Activated T-helper 2 cell treated with anti-CD3 and anti-CD28 coated beads, Interferon-gamma antibody, Interleukin-2, Interleukin-4, amounts not matched to agents 10 μg/mL and 5 μg/mL and 100 μg/mL, durations not matched to agents 14 hours and 24 hours and 36 hours (primary cell): ENCODE measurements at regions of chr9 and their contacts with region 1.

Region 1: GRCh38 chr9:91207729-91208418 is 153.8 kb downstream of the AUH start:
- DNase-seq: no peak
- H3K4me3 Mint-ChIP-seq: peak overlapping the region; percentile 49
- H3K27ac Mint-ChIP-seq: peak overlapping the region; percentile 93
- H3K4me1 Mint-ChIP-seq: peaks cover 67% of the 10 kb centered on the region
- H3K27me3 Mint-ChIP-seq: no peaks in the 10 kb centered on the region

Region 2: GRCh38 chr9:91101611-91102168 is 106.2 kb before region 1 on chr9:
- intact Hi-C with region 1: loop called (anchors 1 kb)
- DNase-seq: peak; percentile 85
- H3K4me3 Mint-ChIP-seq: peak overlapping the region; percentile 78
- H3K27ac Mint-ChIP-seq: peak overlapping the region; percentile 93
- H3K4me1 Mint-ChIP-seq: peaks cover 64% of the 10 kb centered on the region
- H3K27me3 Mint-ChIP-seq: no peaks in the 10 kb centered on the region

Region 3: DNA sequence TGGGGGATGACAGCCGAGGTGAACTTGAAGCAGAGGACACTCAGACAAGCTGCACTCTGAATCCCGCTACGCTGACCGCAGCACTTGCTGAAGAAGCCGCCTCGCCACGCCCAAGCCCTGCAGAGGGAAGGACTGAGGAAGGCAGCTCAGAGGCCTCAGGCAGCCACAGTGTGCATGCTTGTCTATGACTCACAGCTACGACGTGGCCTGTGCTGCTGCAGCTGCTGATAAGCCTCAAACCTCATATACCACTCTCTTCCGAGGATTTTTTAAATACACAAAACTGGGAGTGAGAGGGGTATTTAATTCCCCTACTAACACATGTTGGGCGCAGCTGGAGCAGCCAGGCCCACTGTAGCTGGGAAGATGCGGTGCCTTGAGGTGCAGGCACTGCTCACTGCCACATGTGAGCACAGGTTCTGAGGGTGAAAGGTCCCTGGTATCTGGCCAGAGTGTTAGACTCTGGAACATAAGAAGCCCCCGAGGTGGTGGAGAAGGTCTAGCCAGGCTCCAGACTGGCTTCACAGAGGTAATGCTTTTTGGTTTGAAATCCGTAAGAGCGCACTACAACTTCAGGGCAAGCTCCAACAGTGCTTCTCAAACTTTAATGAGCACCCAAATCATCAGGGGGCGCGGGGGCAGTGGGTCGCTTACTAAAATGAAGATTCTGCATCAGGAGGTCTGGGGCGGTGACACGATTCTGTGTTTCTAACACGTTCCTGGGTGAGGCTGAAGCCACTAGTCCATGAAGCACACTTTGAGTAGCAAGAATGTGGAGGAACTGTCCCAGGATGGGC is 43.0 kb before region 1 on chr9:
- intact Hi-C with region 1: loop called (anchors 1 kb)
- DNase-seq: peak; percentile 82
- H3K4me3 Mint-ChIP-seq: peak overlapping the region; percentile 84
- H3K27ac Mint-ChIP-seq: peak overlapping the region; percentile 98
- H3K4me1 Mint-ChIP-seq: peaks cover 58% of the 10 kb centered on the region
- H3K27me3 Mint-ChIP-seq: no peaks in the 10 kb centered on the region

Region 4: GRCh38 chr9:91245431-91246313 is 37.8 kb after region 1 on chr9:
- intact Hi-C with region 1: loop called (anchors 2 kb)
- DNase-seq: no peak
- H3K4me3 Mint-ChIP-seq: peak overlapping the region; percentile 10
- H3K27ac Mint-ChIP-seq: peak overlapping the region; percentile 80
- H3K4me1 Mint-ChIP-seq: peaks cover 62% of the 10 kb centered on the region
- H3K27me3 Mint-ChIP-seq: no peaks in the 10 kb centered on the region

Region 5: GRCh38 chr9:91346652-91347051 is 138.8 kb after region 1 on chr9:
- intact Hi-C with region 1: loop called (anchors 1 kb)
- DNase-seq: no peak
- H3K4me3 Mint-ChIP-seq: no peak overlapping the region
- H3K27ac Mint-ChIP-seq: peak overlapping the region; percentile 44
- H3K4me1 Mint-ChIP-seq: peaks cover 61% of the 10 kb centered on the region
- H3K27me3 Mint-ChIP-seq: no peaks in the 10 kb centered on the region